PC-9 (cell line): ENCODE measurements at regions of chr15 and their contacts with region 1.

Region 1: GRCh38 chr15:40782580-40783227 is 12.9 kb downstream of the C15orf62 start:
- DNase-seq: peak; percentile 73 to 85
- H3K4me3 ChIP-seq: no peak overlapping the region
- H3K27ac ChIP-seq: no peak overlapping the region
- H3K4me1 ChIP-seq: peaks cover 35% of the 10 kb centered on the region
- H3K27me3 ChIP-seq: no peaks in the 10 kb centered on the region
- CTCF ChIP-seq: peak; percentile 79

Region 2: DNA sequence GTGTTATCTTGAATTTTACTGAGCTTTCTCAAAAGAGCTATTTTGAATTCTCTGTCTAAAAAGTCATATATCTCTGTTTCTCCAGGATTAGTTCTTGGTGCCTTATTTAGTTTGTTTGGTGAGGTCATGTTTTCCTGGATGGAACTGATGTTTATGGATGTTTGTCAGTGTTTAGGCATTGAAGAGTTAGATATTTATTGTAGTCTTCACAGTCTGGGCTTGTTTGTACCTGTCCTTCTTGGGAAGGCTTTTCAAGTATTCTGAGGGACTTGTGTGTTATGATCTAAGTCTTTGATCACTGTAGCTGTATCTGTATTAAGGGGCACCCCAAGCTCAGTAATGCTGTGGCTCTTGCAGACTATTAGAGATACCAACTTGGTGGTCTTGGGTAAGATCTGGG is 98.3 kb before region 1 on chr15:
- CTCF ChIA-PET with region 1: no interaction called
- POLR2A ChIA-PET with region 1: no interaction called
- intact Hi-C with region 1: loop called (anchors 2 kb)
- DNase-seq: no peak
- H3K4me3 ChIP-seq: no peak overlapping the region
- H3K27ac ChIP-seq: no peak overlapping the region
- H3K4me1 ChIP-seq: peaks cover 9% of the 10 kb centered on the region
- H3K27me3 ChIP-seq: no peaks in the 10 kb centered on the region
- CTCF ChIP-seq: no peak

Region 3: GRCh38 chr15:40769274-40770146 is 13.2 kb before region 1 on chr15 and contains the start of gene C15orf62:
- CTCF ChIA-PET with region 1: interaction called, 4 read pairs
- POLR2A ChIA-PET with region 1: interaction called, 4 read pairs
- intact Hi-C with region 1: loop called (anchors 1 kb)
- DNase-seq: peak; percentile 93 to 94
- H3K4me3 ChIP-seq: peak within 1 kb of the TSS; percentile 41; the same call in 1 of the 2 replicates
- H3K27ac ChIP-seq: peak within 1 kb of the TSS; percentile 83
- H3K4me1 ChIP-seq: peaks cover 58% of the 10 kb centered on the region
- H3K27me3 ChIP-seq: no peaks in the 10 kb centered on the region
- CTCF ChIP-seq: no peak
- total RNA-seq, gene C15orf62: 0.23 and 0.33 TPM in 2 replicates

Region 4: GRCh38 chr15:40825661-40826088 is 43.0 kb after region 1 on chr15:
- CTCF ChIA-PET with region 1: no interaction called
- POLR2A ChIA-PET with region 1: interaction called, 3 read pairs
- intact Hi-C with region 1: loop called (anchors 1 kb)
- DNase-seq: peak; percentile 74 to 98
- H3K4me3 ChIP-seq: peak overlapping the region; percentile 22; the same call in 1 of the 2 replicates
- H3K27ac ChIP-seq: peak overlapping the region; percentile 100
- H3K4me1 ChIP-seq: peaks cover 47% of the 10 kb centered on the region
- H3K27me3 ChIP-seq: no peaks in the 10 kb centered on the region
- CTCF ChIP-seq: no peak

Region 5: DNA sequence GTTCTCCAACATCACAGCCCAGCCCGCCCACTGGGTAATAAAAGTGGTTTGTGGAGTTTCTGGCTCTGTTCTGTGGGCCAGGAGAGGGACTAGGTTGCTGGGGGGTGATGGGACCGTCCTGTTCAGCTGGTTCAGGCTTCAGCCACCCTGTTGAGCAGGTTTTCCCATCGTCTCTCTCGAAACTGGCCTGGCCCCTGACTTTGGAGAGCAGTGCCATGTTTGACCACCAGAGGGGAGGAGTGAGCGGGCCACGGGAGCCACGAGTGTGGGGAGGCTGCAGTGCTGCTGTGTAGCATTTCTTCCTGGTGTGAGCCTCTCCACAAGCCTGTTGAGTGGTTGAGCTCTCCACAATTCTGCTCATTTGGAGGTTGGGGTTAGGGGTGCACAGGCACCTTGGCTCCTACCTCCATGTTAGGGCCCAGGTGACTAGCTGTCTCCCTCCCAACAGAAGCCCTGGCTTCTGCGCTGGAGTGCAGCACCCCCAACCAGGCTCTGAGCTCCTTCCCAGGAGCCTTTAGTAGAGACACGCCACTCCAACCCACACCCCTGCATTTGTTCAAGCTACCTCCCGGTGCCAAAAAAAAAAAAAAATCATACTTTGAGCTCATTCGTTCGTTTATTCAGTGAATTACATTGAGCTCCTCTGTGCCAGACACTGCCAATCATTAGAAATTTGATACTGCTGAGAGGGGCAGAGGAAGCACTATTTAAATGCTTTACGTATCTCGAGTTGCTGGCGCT is 75.1 kb after region 1 on chr15:
- CTCF ChIA-PET with region 1: interaction called, 9 read pairs
- POLR2A ChIA-PET with region 1: interaction called, 11 read pairs
- intact Hi-C with region 1: loop called (anchors 1 kb)
- DNase-seq: peak; percentile 85 to 95
- H3K4me3 ChIP-seq: no peak overlapping the region
- H3K27ac ChIP-seq: peak overlapping the region; percentile 89
- H3K4me1 ChIP-seq: peaks cover 36% of the 10 kb centered on the region
- H3K27me3 ChIP-seq: no peaks in the 10 kb centered on the region
- CTCF ChIP-seq: peak; percentile 87